HepG2 (cell line): ENCODE measurements at regions of chr1 and their contacts with region 1.

Region 1: GRCh38 chr1:6245086-6245868 is 1.3 kb downstream of the HES3 start:
- DNase-seq: peak; percentile 46
- ATAC-seq: peak; percentile 56
- H3K4me3 ChIP-seq: peak overlapping the region in 2 of 3 experiments; percentile 27 to 44; a peak in 3 of 6 replicates
- H3K27ac ChIP-seq: no peak overlapping the region
- H3K4me1 ChIP-seq: peaks cover 40% of the 10 kb centered on the region
- H3K27me3 ChIP-seq: peaks cover 15 to 63% of the 10 kb centered on the region in 2 experiments
- CTCF ChIP-seq: peak; percentile 94
- EP300 ChIP-seq: no peak
- POLR2A ChIP-seq: no peak
- RAD21 ChIP-seq: peak; percentile 95

Region 2: DNA sequence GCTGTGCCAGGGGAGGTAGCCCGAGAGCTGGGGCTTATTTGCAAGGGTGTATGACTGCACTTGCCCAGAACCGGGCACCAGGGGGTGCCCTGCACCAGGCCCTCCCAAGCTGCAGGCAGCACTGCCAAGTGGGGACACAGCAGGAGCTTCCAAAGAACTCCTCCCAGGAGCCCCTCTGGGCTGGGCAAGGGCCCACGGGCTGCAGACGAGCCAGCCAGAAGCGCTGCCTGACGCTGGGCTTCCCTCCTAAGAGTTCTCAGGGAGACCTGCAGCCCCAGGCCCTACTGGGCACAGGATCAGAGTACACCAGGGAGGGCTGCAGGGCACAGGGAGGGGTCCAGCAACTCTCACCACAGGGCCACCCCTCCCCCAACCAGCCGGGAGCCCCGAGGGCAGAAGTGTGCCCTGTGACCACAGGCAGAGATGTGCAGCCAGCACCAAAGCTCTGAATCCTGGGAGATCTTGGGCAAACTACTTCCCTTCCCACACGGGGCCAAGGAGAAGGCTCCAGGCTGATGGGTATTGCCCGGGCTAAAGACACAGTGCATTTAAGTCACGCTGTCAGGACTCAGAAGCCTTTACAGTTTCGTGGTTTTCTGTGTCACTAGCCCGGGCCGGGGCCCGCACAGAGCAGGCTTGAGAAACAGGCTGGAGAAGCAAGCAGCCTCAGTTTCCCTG is 136.2 kb before region 1 on chr1:
- CTCF ChIA-PET with region 1: no interaction called
- POLR2A ChIA-PET with region 1: no interaction called
- in situ Hi-C with region 1: no loop called
- intact Hi-C with region 1: loop called (anchors 10 kb)
- DNase-seq: peak; percentile 20
- ATAC-seq: peak; percentile 77
- H3K4me3 ChIP-seq: no peak overlapping the region
- H3K27ac ChIP-seq: no peak overlapping the region
- H3K4me1 ChIP-seq: no peaks in the 10 kb centered on the region
- H3K27me3 ChIP-seq: peaks cover 6 to 50% of the 10 kb centered on the region in 2 experiments
- CTCF ChIP-seq: peak; percentile 73
- EP300 ChIP-seq: no peak
- POLR2A ChIP-seq: no peak
- RAD21 ChIP-seq: peak; percentile 78

Region 3: DNA sequence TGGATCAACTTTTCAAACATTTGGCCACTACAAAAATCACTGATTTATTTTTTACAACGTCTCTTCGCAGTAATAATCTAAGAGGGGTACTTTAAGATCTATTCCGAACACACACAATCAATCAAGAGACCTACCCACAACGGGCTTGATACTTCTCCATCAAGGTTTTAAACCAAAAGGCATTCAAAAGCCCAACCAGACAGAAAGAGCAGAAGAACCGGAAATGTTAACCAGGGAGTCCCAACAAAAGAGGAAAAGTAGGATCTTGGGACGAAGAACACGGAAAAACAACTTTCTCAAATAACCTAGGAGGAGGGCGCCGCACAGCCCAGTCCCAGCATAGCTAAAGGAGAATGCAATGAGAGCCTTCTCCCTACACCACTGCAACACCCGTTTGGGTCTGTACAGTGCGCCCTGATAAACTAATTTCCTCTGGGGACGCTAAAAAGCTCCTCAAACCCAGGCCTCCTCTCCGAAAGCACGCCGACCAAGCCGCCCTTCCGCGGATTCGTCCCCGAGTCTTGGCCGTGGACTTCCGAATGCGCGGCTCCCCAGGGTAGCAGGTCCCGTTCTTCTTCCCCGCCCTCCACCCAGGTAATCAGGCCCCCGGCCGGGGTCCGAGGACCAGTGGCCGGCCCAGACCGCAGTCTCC is 46.5 kb before region 1 on chr1:
- CTCF ChIA-PET with region 1: no interaction called
- POLR2A ChIA-PET with region 1: no interaction called
- in situ Hi-C with region 1: no loop called
- intact Hi-C with region 1: no loop called
- DNase-seq: no peak
- ATAC-seq: peak; percentile 47
- H3K4me3 ChIP-seq: peak overlapping the region; percentile 93 to 97 (median 94)
- H3K27ac ChIP-seq: peak overlapping the region; percentile 82
- H3K4me1 ChIP-seq: peaks cover 48% of the 10 kb centered on the region
- H3K27me3 ChIP-seq: no peaks in the 10 kb centered on the region
- CTCF ChIP-seq: no peak
- EP300 ChIP-seq: no peak
- POLR2A ChIP-seq: no peak; a peak in 1 of 4 replicates
- RAD21 ChIP-seq: no peak

Region 4: GRCh38 chr1:6212193-6212959 is 32.9 kb before region 1 on chr1:
- CTCF ChIA-PET with region 1: no interaction called
- POLR2A ChIA-PET with region 1: no interaction called
- in situ Hi-C with region 1: no loop called
- intact Hi-C with region 1: no loop called
- DNase-seq: no peak
- ATAC-seq: no peak
- H3K4me3 ChIP-seq: no peak overlapping the region
- H3K27ac ChIP-seq: no peak overlapping the region
- H3K4me1 ChIP-seq: peaks cover under 1% of the 10 kb centered on the region; the same call in 1 of the 2 replicates
- H3K27me3 ChIP-seq: no peaks in the 10 kb centered on the region
- CTCF ChIP-seq: no peak
- EP300 ChIP-seq: no peak
- POLR2A ChIP-seq: no peak
- RAD21 ChIP-seq: no peak

Region 5: DNA sequence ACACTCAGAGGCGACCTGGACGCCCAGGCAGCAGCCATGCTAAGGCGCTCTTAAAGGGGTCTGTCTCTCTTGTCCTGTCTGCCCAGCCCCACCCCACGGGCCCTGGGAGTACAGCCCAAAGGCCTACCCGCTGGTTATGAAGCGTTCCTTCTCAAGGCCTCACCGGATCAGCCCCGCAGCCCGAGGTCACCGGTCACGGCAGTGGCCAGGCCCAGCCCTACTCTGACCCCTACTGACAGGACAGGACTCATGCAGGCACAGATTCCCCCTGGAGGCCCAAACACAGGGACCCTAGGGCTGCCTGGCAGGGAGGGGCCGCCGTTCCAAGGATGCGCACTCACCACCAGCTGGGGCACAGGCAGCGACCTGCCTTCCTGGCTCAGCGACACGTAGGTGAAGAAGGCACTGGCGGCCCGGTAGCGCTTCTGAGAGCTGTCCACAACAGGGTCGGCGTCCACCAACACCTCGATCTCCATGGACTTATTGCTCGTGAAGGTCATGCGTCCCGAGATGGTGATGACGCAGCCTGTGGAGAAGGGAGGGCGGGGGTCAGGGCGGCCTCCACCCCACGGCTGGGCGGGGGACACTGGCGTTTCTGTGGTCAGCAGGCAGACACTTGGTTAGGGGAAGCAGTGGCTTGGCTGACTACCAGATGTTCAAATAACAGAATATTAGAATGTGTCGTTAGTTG is 35.6 kb after region 1 on chr1:
- CTCF ChIA-PET with region 1: interaction called, 16 read pairs
- POLR2A ChIA-PET with region 1: no interaction called
- in situ Hi-C with region 1: loop called (anchors 5 kb)
- intact Hi-C with region 1: loop called (anchors 2 kb)
- DNase-seq: peak; percentile 54
- ATAC-seq: peak; percentile 88
- H3K4me3 ChIP-seq: no peak overlapping the region
- H3K27ac ChIP-seq: peak overlapping the region; percentile 47
- H3K4me1 ChIP-seq: peaks cover 27% of the 10 kb centered on the region
- H3K27me3 ChIP-seq: no peaks in the 10 kb centered on the region
- CTCF ChIP-seq: peak; percentile 88
- EP300 ChIP-seq: no peak
- POLR2A ChIP-seq: no peak
- RAD21 ChIP-seq: peak; percentile 73

Region 6: GRCh38 chr1:6317098-6317760 is 72.0 kb after region 1 on chr1:
- CTCF ChIA-PET with region 1: no interaction called
- POLR2A ChIA-PET with region 1: no interaction called
- in situ Hi-C with region 1: no loop called
- intact Hi-C with region 1: no loop called
- DNase-seq: no peak
- ATAC-seq: no peak
- H3K4me3 ChIP-seq: no peak overlapping the region
- H3K27ac ChIP-seq: no peak overlapping the region
- H3K4me1 ChIP-seq: no peaks in the 10 kb centered on the region
- H3K27me3 ChIP-seq: no peaks in the 10 kb centered on the region
- CTCF ChIP-seq: no peak
- EP300 ChIP-seq: no peak
- POLR2A ChIP-seq: no peak
- RAD21 ChIP-seq: no peak

Region 7: DNA sequence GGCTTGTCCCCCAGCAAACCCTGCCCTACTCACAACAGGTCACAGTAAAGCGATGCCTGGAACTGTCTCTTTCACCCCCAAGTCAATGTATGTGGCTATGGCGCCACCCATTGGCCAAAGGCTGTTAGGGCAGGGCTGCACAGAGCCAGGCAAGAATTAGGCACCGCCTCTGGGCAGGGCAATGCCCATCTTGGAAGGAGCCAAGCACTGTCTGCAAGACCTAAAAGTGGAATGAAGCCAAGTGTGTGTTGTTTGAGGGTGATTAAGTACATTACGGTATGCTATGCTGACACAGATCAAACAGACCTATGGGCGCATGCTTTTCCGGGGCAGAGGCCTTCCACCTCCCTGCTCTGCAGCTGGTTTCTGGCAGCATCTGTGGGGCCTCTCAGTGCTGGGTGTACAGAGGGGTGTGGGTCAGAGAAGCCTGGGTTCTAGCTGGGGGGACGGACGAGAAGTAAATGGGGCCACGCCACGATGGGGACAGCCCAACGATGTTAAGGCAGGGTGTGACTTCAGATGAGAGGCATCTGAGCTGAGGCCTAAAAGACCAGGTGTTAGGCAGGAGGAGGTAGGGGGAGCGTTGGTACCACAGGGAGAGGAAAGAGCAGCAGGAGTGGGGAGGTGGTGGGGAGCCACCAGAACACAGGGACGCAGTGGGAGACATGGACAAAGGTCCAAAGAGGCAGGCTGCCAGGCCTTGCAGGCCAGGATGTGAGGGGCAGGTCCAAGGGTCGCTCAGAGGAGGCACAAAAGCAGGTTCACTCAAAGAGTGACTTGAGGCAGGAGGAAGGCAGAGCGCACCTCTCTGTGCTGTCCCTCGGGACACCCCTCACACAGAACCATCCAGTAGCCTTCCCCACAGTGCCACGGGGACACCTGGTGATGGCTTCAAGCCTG is 98.5 kb after region 1 on chr1:
- CTCF ChIA-PET with region 1: interaction called, 39 read pairs
- POLR2A ChIA-PET with region 1: interaction called, 3 read pairs
- in situ Hi-C with region 1: loop called (anchors 5 kb)
- intact Hi-C with region 1: loop called (anchors 1 kb)
- DNase-seq: peak; percentile 50
- ATAC-seq: peak; percentile 79
- H3K4me3 ChIP-seq: peak overlapping the region in 1 of 3 experiments; percentile 42; a peak in 2 of 6 replicates
- H3K27ac ChIP-seq: peak overlapping the region; percentile 17
- H3K4me1 ChIP-seq: peaks cover 12% of the 10 kb centered on the region
- H3K27me3 ChIP-seq: no peaks in the 10 kb centered on the region
- CTCF ChIP-seq: peak; percentile 98
- EP300 ChIP-seq: no peak
- POLR2A ChIP-seq: no peak
- RAD21 ChIP-seq: peak; percentile 82

Region 8: DNA sequence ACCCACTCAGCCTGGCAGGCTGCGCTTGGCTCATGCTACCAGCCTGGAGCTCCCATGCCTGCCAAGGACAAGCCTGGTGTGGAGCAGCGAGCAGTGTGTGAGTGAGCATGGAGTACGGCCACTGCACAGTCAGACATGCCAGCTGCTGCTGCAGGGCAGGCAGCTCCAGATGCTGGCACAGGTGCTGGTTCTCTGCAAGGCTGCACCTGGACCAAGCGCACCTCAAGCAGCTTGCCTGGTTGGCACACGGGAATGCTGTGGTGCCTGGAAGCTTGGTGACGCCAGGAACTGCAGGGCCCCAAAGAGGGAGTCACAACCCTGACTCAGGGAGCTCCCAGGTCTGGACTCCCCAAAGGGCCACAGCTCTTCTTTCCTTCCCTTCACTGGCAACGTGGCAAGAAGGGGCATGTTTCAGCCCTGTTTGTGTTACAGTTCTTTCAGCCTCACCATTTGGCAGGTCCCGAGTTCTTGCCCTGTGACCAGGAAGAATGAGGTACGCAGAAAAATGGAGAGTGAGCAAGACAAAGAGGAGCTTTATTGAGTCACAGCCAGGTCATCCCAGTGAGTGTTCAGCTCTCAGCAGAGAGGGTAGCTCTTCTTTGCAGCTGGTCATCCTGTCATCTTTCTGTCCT is 122.2 kb after region 1 on chr1:
- CTCF ChIA-PET with region 1: no interaction called
- POLR2A ChIA-PET with region 1: no interaction called
- in situ Hi-C with region 1: no loop called
- intact Hi-C with region 1: no loop called
- DNase-seq: no peak
- ATAC-seq: no peak; the same call in 2 of the 3 replicates
- H3K4me3 ChIP-seq: no peak overlapping the region
- H3K27ac ChIP-seq: no peak overlapping the region
- H3K4me1 ChIP-seq: peaks cover 25% of the 10 kb centered on the region
- H3K27me3 ChIP-seq: no peaks in the 10 kb centered on the region
- CTCF ChIP-seq: no peak
- EP300 ChIP-seq: no peak
- POLR2A ChIP-seq: no peak
- RAD21 ChIP-seq: no peak

Region 9: DNA sequence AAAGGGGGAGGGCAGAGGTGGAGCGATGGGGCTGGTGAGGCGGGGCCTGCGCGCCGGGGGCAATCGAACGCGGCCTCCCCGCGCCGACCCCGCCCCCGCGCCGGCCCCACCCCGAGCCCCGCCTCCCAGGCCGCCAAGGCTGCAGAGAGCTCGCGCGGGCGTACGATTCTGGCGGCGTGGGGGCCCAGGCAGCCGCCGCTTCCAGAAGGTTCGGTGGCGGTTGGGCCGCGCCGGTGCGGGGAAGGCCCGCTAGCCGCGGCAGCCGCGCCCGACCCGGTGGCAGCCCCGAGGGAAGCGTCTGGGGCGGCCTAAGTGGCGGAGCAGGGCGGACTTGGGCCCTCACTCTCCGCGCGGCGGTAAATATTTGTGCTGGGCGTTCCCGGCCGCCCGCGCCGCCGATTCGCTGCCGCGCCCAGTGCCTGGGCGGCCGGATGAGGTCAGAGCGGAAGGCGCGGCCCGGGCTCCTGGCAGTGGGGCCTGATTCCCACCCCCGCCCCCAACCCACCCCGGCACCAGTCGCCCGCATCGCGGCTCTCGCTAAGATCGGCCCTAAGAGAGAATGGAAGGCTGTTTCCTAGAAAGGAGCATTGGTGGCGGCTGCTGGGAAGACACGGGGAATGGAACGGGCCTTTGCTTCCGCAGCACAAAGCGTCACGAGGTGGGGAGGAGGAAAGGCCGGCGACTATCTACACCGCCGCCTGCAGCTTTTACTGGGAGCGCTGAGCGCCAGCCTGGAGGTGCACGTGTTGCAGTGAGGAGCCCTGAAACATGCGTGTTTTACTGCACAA is 148.3 kb after region 1 on chr1 and contains the start of gene ACOT7:
- CTCF ChIA-PET with region 1: no interaction called
- POLR2A ChIA-PET with region 1: no interaction called
- in situ Hi-C with region 1: no loop called
- intact Hi-C with region 1: loop called (anchors 5 kb)
- DNase-seq: peak; percentile 79
- ATAC-seq: peak; percentile 93
- H3K4me3 ChIP-seq: peak within 1 kb of the TSS; percentile 66 to 76 (median 70)
- H3K27ac ChIP-seq: peak within 1 kb of the TSS; percentile 97
- H3K4me1 ChIP-seq: peaks cover 46% of the 10 kb centered on the region
- H3K27me3 ChIP-seq: no peaks in the 10 kb centered on the region
- CTCF ChIP-seq: peak; percentile 15; the same call in 1 of the 2 replicates
- EP300 ChIP-seq: no peak
- POLR2A ChIP-seq: peak; percentile 65 to 66; a peak in 3 of 4 replicates
- RAD21 ChIP-seq: peak; percentile 37; the same call in 1 of the 2 replicates
- total RNA-seq, gene ACOT7: 33.0 and 43.2 TPM in 2 replicates

Region 10: DNA sequence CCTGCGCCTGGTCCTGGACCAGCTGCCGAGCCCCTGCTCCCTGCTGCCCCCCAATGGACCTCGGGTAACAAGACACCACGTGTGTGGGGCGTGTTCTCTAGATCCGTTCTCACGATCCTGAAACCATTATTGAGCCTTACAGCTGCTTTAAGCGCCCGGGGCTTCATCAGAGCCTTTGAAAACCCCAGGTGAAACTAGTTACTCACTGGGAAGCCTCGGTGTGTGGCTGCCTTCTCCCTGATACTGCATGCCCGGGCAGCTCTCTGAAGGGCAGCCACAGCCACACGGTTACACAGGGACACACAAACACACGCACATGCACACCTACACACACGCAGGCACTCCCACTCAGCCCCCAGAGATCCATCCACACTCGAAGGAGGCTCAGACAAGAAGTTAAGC is 169.2 kb after region 1 on chr1:
- CTCF ChIA-PET with region 1: no interaction called
- POLR2A ChIA-PET with region 1: no interaction called
- in situ Hi-C with region 1: loop called (anchors 10 kb)
- intact Hi-C with region 1: no loop called
- DNase-seq: peak; percentile 49
- ATAC-seq: peak; percentile 76
- H3K4me3 ChIP-seq: peak overlapping the region in 2 of 3 experiments; percentile 26 to 57; a peak in 3 of 6 replicates
- H3K27ac ChIP-seq: no peak overlapping the region
- H3K4me1 ChIP-seq: peaks cover 56% of the 10 kb centered on the region
- H3K27me3 ChIP-seq: peaks cover 11 to 58% of the 10 kb centered on the region in 2 experiments
- CTCF ChIP-seq: peak; percentile 84
- EP300 ChIP-seq: no peak
- POLR2A ChIP-seq: no peak
- RAD21 ChIP-seq: no peak